GM12878 (cell line): ENCODE measurements at regions of chr20 and their contacts with region 1.

Region 1: GRCh38 chr20:18287915-18288748 is at the start of gene ZNF133:
- DNase-seq: peak; percentile 78
- ATAC-seq: peak; percentile 100
- H3K4me3 ChIP-seq: peak within 1 kb of the TSS; percentile 92
- H3K27ac ChIP-seq: peak within 1 kb of the TSS; percentile 94
- H3K4me1 ChIP-seq: peaks cover 11% of the 10 kb centered on the region
- H3K27me3 ChIP-seq: no peaks in the 10 kb centered on the region
- CTCF ChIP-seq: peak in 2 of 3 experiments; percentile 13 to 14; a peak in 2 of 6 replicates
- EP300 ChIP-seq: no peak
- POLR2A ChIP-seq: peak; percentile 97
- RAD21 ChIP-seq: no peak
- polyA plus RNA-seq, gene ZNF133: 2.0 to 2.2 TPM

Region 2: GRCh38 chr20:18137412-18138265 is 150.5 kb before region 1 on chr20 and contains the starts of genes KAT14 and PET117:
- CTCF ChIA-PET with region 1: interaction called, 3 read pairs
- POLR2A ChIA-PET with region 1: interaction called, 5 read pairs
- RAD21 ChIA-PET with region 1: no interaction called
- SMC1A ChIA-PET with region 1: interaction called, 3 read pairs
- in situ Hi-C with region 1: no loop called
- intact Hi-C with region 1: loop called (anchors 10 kb)
- DNase-seq: peak; percentile 63
- ATAC-seq: peak; percentile 91
- H3K4me3 ChIP-seq: peak within 1 kb of the TSS; percentile 78
- H3K27ac ChIP-seq: peak within 1 kb of the TSS; percentile 91
- H3K4me1 ChIP-seq: no peaks in the 10 kb centered on the region
- H3K27me3 ChIP-seq: no peaks in the 10 kb centered on the region
- CTCF ChIP-seq: no peak
- EP300 ChIP-seq: 0 out of 4 replicates have a peak, but pooled peaks of 1 of the 2 experiments have one; percentile 26
- POLR2A ChIP-seq: peak; percentile 92
- RAD21 ChIP-seq: no peak
- polyA plus RNA-seq, gene KAT14: 4.0 to 7.6 TPM
- polyA plus RNA-seq, gene PET117: 6.0 to 11.0 TPM

Region 3: DNA sequence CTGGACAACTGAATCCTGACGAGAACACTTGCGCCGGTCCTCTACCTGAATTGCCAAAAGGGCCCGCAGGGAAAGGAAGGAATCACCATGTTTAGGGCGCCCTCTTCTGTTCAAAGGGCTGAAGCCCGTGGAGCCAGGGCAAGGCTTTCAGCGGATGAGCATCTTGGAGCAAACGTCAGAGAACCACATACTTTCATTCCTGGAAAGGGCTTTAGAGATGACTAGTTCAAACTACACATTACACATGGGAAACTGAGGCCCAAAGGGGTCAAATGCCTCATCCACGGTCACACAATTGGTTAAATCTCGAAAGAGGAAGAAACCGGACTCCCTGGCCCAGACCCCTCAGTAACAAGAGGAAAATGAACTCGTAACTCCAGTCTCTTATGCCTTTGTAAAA is 11.3 kb before region 1 on chr20:
- CTCF ChIA-PET with region 1: interaction called, 14 read pairs
- POLR2A ChIA-PET with region 1: no interaction called
- RAD21 ChIA-PET with region 1: no interaction called
- SMC1A ChIA-PET with region 1: interaction called, 5 read pairs
- in situ Hi-C with region 1: no loop called
- intact Hi-C with region 1: no loop called
- DNase-seq: no peak
- ATAC-seq: peak; percentile 92
- H3K4me3 ChIP-seq: no peak overlapping the region
- H3K27ac ChIP-seq: no peak overlapping the region
- H3K4me1 ChIP-seq: no peaks in the 10 kb centered on the region
- H3K27me3 ChIP-seq: no peaks in the 10 kb centered on the region; a peak in 1 of 4 replicates
- CTCF ChIP-seq: peak; percentile 79 to 87 (median 87)
- EP300 ChIP-seq: no peak
- POLR2A ChIP-seq: no peak
- RAD21 ChIP-seq: peak; percentile 87

Region 4: DNA sequence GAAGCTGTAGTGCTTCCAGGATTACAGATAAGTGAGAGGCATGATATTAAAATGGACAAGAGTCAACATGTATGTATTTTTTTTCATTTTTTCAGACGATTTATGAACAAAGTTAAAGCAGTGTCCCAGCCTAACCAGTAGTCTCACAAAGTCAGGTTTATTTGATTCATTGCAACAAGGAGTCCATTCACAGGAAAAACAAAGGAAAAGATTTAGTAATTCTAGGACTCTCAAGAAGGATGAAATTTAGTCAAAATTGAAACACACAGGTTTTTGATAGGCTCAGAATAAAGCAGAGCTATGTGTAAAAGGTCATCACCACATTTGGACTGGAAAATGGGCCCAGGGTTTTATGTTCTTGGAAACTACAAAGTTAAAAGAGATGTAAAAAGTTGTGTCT is 84.2 kb after region 1 on chr20:
- CTCF ChIA-PET with region 1: no interaction called
- POLR2A ChIA-PET with region 1: no interaction called
- RAD21 ChIA-PET with region 1: no interaction called
- SMC1A ChIA-PET with region 1: no interaction called
- in situ Hi-C with region 1: no loop called
- intact Hi-C with region 1: no loop called
- DNase-seq: no peak
- ATAC-seq: no peak
- H3K4me3 ChIP-seq: no peak overlapping the region
- H3K27ac ChIP-seq: no peak overlapping the region
- H3K4me1 ChIP-seq: no peaks in the 10 kb centered on the region
- H3K27me3 ChIP-seq: no peaks in the 10 kb centered on the region
- CTCF ChIP-seq: no peak
- EP300 ChIP-seq: no peak
- POLR2A ChIP-seq: no peak
- RAD21 ChIP-seq: no peak